H1 (cell line): ENCODE measurements at regions of chr16 and their contacts with region 1.

Region 1: DNA sequence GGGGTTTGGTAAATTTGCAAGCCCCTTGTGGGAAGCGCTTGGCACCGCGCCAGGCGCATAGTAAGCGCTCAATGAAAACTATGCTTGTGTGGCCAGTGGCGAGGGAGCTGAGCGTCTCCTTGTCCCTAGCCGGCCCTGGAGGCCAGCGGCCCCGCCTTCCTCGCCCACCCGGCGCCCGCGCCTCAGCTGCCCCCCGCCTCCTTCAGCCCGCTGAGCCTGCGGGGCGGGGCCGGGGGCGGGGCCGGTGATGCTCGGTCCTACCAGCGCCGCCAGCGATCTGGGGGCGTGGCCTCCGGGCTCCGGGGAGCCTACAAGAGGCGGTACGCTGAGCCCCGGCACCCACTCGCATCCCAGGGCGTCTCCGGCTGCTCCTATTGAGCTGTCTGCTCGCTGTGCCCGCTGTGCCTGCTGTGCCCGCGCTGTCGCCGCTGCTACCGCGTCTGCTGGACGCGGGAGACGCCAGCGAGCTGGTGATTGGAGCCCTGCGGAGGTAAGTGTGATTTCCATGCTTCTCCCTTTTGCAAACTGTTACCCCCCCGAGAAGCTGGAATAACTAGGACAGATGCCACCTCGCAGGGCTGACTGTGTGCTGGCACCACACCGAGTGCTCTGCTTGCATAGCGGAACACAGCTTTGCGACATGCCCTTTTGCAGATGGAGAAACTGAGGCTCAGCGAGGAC is at the start of gene CRISPLD2:
- DNase-seq: peak; percentile 60 to 97
- H3K4me3 ChIP-seq: peak within 1 kb of the TSS; percentile 18 to 67 (median 61)
- H3K27ac ChIP-seq: no peak within 1 kb of the TSS
- H3K4me1 ChIP-seq: peaks cover 0 to 6% (median 3%) of the 10 kb centered on the region in 4 experiments; a peak in 6 of 7 replicates
- H3K27me3 ChIP-seq: peaks cover 5 to 28% (median 21%) of the 10 kb centered on the region in 4 experiments
- CTCF ChIP-seq: no peak
- EP300 ChIP-seq: no peak
- POLR2A ChIP-seq: 0 out of 3 replicates have a peak, but pooled peaks of 1 of the 2 experiments have one; percentile 44
- RAD21 ChIP-seq: no peak
- total RNA-seq, gene CRISPLD2: 5.1 and 6.4 TPM in 2 replicates

Region 2: GRCh38 chr16:84832488-84833143 is 12.8 kb after region 1 on chr16:
- CTCF ChIA-PET with region 1: interaction called, 5 read pairs
- POLR2A ChIA-PET with region 1: interaction called, 13 read pairs
- DNase-seq: no peak
- H3K4me3 ChIP-seq: no peak overlapping the region
- H3K27ac ChIP-seq: no peak overlapping the region
- H3K4me1 ChIP-seq: peaks cover 0 to 7% (median 4%) of the 10 kb centered on the region in 4 experiments; a peak in 4 of 7 replicates
- H3K27me3 ChIP-seq: no peaks in the 10 kb centered on the region
- CTCF ChIP-seq: no peak
- EP300 ChIP-seq: no peak
- POLR2A ChIP-seq: no peak
- RAD21 ChIP-seq: no peak

Region 3: GRCh38 chr16:84839054-84839453 is 19.3 kb after region 1 on chr16:
- CTCF ChIA-PET with region 1: interaction called, 7 read pairs
- POLR2A ChIA-PET with region 1: interaction called, 10 read pairs
- DNase-seq: no peak
- H3K4me3 ChIP-seq: no peak overlapping the region; a peak in 1 of 8 replicates
- H3K27ac ChIP-seq: no peak overlapping the region
- H3K4me1 ChIP-seq: peaks cover 3 to 33% (median 25%) of the 10 kb centered on the region in 4 experiments
- H3K27me3 ChIP-seq: peaks cover 0 to 16% (median 10%) of the 10 kb centered on the region in 4 experiments; a peak in 5 of 7 replicates
- CTCF ChIP-seq: no peak
- EP300 ChIP-seq: no peak
- POLR2A ChIP-seq: no peak
- RAD21 ChIP-seq: no peak

Region 4: GRCh38 chr16:84853961-84854360 is 34.2 kb after region 1 on chr16:
- CTCF ChIA-PET with region 1: no interaction called
- POLR2A ChIA-PET with region 1: no interaction called
- DNase-seq: no peak
- H3K4me3 ChIP-seq: no peak overlapping the region
- H3K27ac ChIP-seq: no peak overlapping the region
- H3K4me1 ChIP-seq: peaks cover 0 to 4% (median 3%) of the 10 kb centered on the region in 4 experiments; a peak in 3 of 7 replicates
- H3K27me3 ChIP-seq: no peaks in the 10 kb centered on the region
- CTCF ChIP-seq: no peak
- EP300 ChIP-seq: no peak
- POLR2A ChIP-seq: no peak
- RAD21 ChIP-seq: no peak

Region 5: DNA sequence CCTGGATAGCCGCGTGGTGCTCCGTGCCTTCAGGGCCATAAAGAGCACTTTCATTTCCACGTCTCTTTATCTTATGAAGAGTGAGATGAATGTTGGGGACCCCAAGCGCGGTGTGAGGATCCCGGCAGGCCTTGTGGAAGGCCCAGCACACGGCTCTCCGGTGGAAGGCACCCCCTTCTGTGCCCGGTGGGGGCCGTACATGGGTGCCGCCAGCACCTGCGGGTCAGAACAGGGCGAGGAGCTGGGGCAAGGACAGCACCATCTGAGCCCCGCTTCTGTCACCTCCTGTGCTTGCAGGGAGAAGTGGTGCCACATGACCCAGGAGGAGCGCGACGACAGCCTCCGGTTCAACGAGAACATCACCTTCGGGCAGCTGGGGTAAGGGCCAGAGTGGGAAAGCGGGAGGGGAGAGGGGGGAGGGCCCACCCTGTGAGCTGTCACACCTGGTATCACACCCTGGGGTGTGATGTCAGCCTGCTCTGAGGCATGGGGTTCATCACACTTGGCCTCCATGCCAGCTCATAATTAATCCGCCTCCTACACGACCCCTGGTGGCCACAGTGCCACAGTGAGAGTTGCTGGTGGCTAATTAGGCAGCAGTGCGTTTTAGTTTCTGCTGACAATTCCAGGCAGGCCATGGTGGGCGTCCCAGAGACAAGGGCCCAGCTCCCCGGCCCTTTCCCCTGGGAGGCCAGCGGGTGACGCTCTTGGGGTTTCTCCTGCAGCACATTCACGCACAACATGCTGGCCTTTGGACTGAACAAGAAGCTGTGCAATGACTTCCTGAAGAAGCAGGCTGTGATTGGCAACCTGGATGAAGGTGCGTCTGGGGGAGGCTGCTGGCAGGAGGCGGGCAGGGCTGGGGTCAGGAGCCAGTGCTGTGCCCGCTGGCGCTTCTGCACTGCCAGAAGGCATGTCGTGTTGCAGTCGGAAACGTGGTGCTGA is 266.8 kb after region 1 on chr16:
- CTCF ChIA-PET with region 1: no interaction called
- POLR2A ChIA-PET with region 1: no interaction called
- DNase-seq: peak; percentile 44 to 89
- H3K4me3 ChIP-seq: no peak overlapping the region
- H3K27ac ChIP-seq: no peak overlapping the region
- H3K4me1 ChIP-seq: peaks cover 11 to 21% (median 19%) of the 10 kb centered on the region in 4 experiments
- H3K27me3 ChIP-seq: peaks cover 8 to 39% (median 32%) of the 10 kb centered on the region in 4 experiments
- CTCF ChIP-seq: peak; percentile 89 to 94 (median 93)
- EP300 ChIP-seq: no peak
- POLR2A ChIP-seq: no peak
- RAD21 ChIP-seq: peak; percentile 68 to 83